Activated CD4-positive, alpha-beta memory T cell treated with anti-CD3 and anti-CD28 coated beads for 36 hours (primary cell): ENCODE measurements at regions of chr11 and their contacts with region 1.

Region 1: DNA sequence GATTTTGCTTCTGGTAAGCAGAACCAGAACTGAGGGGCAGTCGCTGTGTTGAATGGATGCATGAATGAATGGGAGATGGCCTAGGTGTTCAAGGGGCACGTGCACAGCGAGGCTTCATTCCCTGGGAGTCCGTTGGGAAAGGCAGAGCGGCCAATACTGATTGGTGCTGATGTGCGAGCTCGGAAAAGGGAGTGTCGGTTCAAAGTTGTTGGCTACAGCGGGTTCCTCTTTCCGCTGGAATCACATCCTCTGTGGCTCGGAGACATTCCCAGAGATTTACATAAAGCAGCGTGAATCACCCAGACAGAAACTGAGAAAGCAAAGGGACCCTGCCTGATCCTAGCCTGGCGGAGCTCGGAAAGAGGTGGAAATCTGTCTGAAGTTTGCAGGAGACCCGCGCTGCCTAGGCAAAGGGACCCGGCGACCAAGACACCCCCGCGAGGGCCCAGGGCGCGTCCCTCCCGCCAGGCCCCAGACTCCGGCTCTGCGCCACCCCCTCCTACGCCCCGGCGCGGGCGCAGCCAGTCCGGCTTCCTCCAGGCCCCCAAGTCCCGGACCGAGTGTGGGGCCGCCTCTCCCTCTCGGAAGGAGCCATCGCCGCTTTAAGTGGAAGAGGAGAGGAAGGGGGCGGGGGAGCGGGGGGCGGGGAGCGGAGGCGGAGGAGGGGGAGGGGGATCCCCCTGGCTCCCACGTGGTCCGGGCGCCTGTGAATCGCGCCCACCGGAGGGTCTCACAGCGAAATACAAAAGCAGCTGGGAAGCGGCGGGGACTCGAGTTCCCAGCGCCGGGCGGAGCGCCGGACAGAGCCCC is at the start of gene FJX1:
- DNase-seq: peak; percentile 30
- H3K4me3 Mint-ChIP-seq: peak within 1 kb of the TSS; percentile 58
- H3K27ac Mint-ChIP-seq: no peak within 1 kb of the TSS
- H3K4me1 Mint-ChIP-seq: peaks cover 12% of the 10 kb centered on the region
- H3K27me3 Mint-ChIP-seq: peaks cover 58% of the 10 kb centered on the region
- total RNA-seq, gene FJX1: 0.46 to 0.62 TPM

Region 2: DNA sequence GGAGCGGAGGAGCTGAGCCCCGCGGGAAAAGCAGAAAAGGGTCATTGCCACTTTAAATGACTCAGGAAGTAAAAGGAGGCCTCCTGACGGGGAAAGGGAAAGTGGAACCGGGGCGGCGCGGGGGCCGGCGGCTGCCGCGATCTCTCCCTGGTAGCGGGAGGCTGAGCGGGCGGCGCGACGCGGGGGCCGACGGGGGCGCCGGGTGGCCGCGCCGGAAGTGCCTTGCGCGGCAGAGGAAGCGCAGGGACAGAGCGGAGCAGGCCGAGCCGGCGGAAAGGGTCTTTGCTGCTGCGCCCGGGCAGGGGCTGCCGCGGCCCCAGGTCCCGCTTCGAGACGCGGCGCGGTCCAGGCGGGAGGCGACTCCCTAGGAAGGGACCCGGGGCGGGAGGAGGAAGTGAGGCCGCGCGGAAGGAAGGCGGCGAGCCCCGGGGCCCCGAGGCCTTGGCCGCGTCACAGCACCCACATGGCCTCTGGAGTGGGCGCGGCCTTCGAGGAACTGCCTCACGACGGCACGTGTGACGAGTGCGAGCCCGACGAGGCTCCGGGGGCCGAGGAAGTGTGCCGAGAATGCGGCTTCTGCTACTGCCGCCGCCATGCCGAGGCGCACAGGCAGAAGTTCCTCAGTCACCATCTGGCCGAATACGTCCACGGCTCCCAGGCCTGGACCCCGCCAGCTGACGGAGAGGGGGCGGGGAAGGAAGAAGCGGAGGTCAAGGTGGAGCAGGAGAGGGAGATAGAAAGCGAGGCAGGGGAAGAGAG is 44.9 kb after region 1 on chr11 and contains the start of gene TRIM44:
- CTCF ChIA-PET with region 1: no interaction called
- POLR2A ChIA-PET with region 1: interaction called, 3 read pairs
- intact Hi-C with region 1: loop called (anchors 1 kb)
- DNase-seq: peak; percentile 91
- H3K4me3 Mint-ChIP-seq: peak within 1 kb of the TSS; percentile 94
- H3K27ac Mint-ChIP-seq: peak within 1 kb of the TSS; percentile 94
- H3K4me1 Mint-ChIP-seq: peaks cover 43% of the 10 kb centered on the region
- H3K27me3 Mint-ChIP-seq: peaks cover 5% of the 10 kb centered on the region
- total RNA-seq, gene TRIM44: 27.3 to 30.0 TPM

Region 3: GRCh38 chr11:36053862-36054598 is 436.1 kb after region 1 on chr11:
- CTCF ChIA-PET with region 1: no interaction called
- POLR2A ChIA-PET with region 1: no interaction called
- intact Hi-C with region 1: loop called (anchors 5 kb)
- DNase-seq: no peak
- H3K4me3 Mint-ChIP-seq: no peak overlapping the region
- H3K27ac Mint-ChIP-seq: no peak overlapping the region
- H3K4me1 Mint-ChIP-seq: no peaks in the 10 kb centered on the region
- H3K27me3 Mint-ChIP-seq: peaks cover 6% of the 10 kb centered on the region

Region 4: GRCh38 chr11:36149538-36150242 is 531.8 kb after region 1 on chr11:
- CTCF ChIA-PET with region 1: interaction called, 3 read pairs
- POLR2A ChIA-PET with region 1: no interaction called
- intact Hi-C with region 1: loop called (anchors 1 kb)
- DNase-seq: peak; percentile 66
- H3K4me3 Mint-ChIP-seq: no peak overlapping the region
- H3K27ac Mint-ChIP-seq: no peak overlapping the region
- H3K4me1 Mint-ChIP-seq: peaks cover 10% of the 10 kb centered on the region
- H3K27me3 Mint-ChIP-seq: peaks cover 6% of the 10 kb centered on the region

Region 5: DNA sequence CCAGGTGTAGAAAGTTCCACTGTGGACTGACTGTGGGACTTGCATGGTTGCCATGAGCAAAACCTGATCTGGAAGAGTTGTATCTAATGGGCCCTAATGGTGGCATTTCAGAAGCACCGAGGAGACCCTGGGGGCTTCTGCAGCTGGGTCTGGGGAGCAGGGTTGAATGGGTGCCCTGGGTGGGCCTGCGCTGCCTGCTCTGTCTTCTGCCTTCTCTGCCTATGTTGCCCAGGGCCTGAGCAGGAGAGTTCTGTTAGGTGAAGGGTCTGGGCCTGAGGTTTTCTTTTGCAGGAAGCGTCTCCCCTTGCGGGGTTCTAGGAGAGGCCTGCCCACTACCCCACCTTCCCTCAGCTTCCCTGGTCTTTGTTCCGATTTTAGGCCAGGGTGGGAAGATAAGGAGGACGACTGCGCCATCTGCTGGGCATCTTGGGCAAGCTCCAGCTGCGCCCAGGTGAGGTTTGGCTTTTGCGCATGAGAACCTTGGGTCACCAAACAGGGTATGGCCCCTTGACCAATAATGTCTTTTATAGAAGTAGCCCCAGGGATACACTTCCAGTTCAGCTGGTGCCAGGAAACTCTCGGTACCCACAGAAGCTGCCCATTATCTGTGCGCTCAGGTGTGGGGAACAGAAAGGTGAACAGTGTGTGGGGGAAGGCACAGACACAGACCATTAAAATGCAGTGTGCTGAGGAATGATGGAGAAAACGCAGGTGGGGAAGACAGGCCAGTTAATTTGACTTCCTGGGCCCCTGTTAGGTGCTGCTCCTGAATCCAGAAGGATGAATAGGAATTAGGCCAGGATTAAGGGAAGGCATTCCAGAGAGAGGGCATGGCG is 648.1 kb after region 1 on chr11:
- CTCF ChIA-PET with region 1: interaction called, 52 read pairs
- POLR2A ChIA-PET with region 1: no interaction called
- intact Hi-C with region 1: loop called (anchors 1 kb)
- DNase-seq: peak; percentile 72
- H3K4me3 Mint-ChIP-seq: no peak overlapping the region
- H3K27ac Mint-ChIP-seq: no peak overlapping the region
- H3K4me1 Mint-ChIP-seq: no peaks in the 10 kb centered on the region
- H3K27me3 Mint-ChIP-seq: peaks cover 11% of the 10 kb centered on the region

Region 6: GRCh38 chr11:36746886-36747710 is 1129.2 kb after region 1 on chr11:
- CTCF ChIA-PET with region 1: no interaction called
- POLR2A ChIA-PET with region 1: no interaction called
- intact Hi-C with region 1: loop called (anchors 2 kb)
- DNase-seq: peak; percentile 91
- H3K4me3 Mint-ChIP-seq: no peak overlapping the region
- H3K27ac Mint-ChIP-seq: no peak overlapping the region
- H3K4me1 Mint-ChIP-seq: peaks cover 3% of the 10 kb centered on the region
- H3K27me3 Mint-ChIP-seq: peaks cover 11% of the 10 kb centered on the region